T-cell (primary cell): ENCODE measurements at regions of chr17 and their contacts with region 1.

Region 1: GRCh38 chr17:77391668-77392375 is 251.1 kb downstream of the SEC14L1 start:
- DNase-seq: peak in 13 of 35 experiments; percentile 27 to 68 (median 32)
- ATAC-seq: peak; percentile 38 to 82 (median 74)
- H3K4me3 ChIP-seq: peak overlapping the region; percentile 2 to 58
- H3K4me3 Mint-ChIP-seq: peak overlapping the region; percentile 42 to 86 (median 62)
- H3K27ac ChIP-seq: peak overlapping the region; percentile 44
- H3K27ac Mint-ChIP-seq: peak overlapping the region; percentile 93 to 96
- H3K4me1 ChIP-seq: peaks cover 56 to 93% of the 10 kb centered on the region in 2 experiments
- H3K4me1 Mint-ChIP-seq: peaks cover 85 to 87% (median 86%) of the 10 kb centered on the region in 3 donors
- H3K27me3 ChIP-seq: no peaks in the 10 kb centered on the region
- H3K27me3 Mint-ChIP-seq: no peaks in the 10 kb centered on the region

Region 2: DNA sequence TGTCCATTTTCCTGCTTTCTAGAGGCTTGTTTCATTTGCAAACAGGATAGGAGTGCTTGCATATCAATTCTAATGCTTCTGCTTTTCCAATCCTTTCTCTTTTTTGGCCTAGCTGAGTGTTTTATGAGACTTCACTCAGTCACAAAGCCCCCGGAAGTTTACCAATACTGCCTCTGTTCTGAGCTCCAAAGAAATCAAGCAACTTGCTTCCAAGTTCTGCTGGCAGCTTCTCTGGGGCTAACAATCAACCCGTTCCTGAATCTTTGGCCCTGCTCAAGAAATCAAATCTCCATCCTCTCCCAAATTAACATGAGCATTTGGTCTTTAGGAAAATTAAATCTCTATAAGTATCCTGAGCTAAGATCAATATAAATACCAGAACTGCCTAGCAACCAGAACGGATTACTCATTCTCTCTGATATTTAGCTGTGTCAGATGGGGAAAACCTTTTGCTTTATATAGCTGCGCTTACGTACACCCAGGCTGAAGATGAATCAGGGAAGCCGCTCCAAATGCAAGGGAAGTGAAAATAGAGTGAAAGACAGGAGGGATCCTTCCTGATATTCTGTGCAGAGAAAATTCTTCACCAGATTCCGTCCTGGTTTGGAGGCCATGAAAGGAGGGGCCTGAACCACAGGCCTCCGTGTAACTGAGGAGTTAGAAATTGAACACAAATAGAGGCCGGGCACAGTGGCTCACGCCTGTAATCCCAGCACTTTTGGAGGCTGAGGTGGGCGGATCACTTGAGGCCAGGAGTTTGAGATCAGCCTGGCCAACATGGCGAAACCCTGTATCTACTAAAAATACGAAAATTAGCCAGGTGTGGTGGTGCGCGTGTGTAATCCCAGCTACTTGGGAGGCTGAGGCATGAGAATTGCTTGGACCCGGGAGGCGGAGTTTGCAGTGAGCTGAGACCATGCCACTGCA is 1963.0 kb before region 1 on chr17:
- CTCF ChIA-PET with region 1: interaction called in 1 of 2 experiments, 10 read pairs
- POLR2A ChIA-PET with region 1: no interaction called
- DNase-seq: no peak
- ATAC-seq: no peak
- H3K4me3 ChIP-seq: no peak overlapping the region
- H3K4me3 Mint-ChIP-seq: no peak overlapping the region
- H3K27ac ChIP-seq: no peak overlapping the region
- H3K27ac Mint-ChIP-seq: no peak overlapping the region
- H3K4me1 ChIP-seq: peaks cover 4 to 8% of the 10 kb centered on the region in 2 experiments
- H3K4me1 Mint-ChIP-seq: peaks cover 7 to 14% (median 11%) of the 10 kb centered on the region in 3 donors
- H3K27me3 ChIP-seq: peaks cover 0 to 5% of the 10 kb centered on the region in 2 experiments
- H3K27me3 Mint-ChIP-seq: peaks cover 3 to 4% of the 10 kb centered on the region in 2 donors

Region 3: GRCh38 chr17:76997981-76998531 is 393.8 kb before region 1 on chr17:
- CTCF ChIA-PET with region 1: no interaction called
- POLR2A ChIA-PET with region 1: interaction called in 1 of 2 experiments, 11 read pairs
- DNase-seq: peak; percentile 39 to 91 (median 69)
- ATAC-seq: peak; percentile 89 to 92 (median 89)
- H3K4me3 ChIP-seq: peak overlapping the region; percentile 27
- H3K4me3 Mint-ChIP-seq: peak overlapping the region; percentile 45 to 76 (median 56)
- H3K27ac ChIP-seq: peak overlapping the region; percentile 97
- H3K27ac Mint-ChIP-seq: peak overlapping the region; percentile 92 to 95
- H3K4me1 ChIP-seq: peaks cover 33 to 64% of the 10 kb centered on the region in 2 experiments
- H3K4me1 Mint-ChIP-seq: peaks cover 54 to 64% (median 58%) of the 10 kb centered on the region in 3 donors
- H3K27me3 ChIP-seq: no peaks in the 10 kb centered on the region
- H3K27me3 Mint-ChIP-seq: no peaks in the 10 kb centered on the region

Region 4: DNA sequence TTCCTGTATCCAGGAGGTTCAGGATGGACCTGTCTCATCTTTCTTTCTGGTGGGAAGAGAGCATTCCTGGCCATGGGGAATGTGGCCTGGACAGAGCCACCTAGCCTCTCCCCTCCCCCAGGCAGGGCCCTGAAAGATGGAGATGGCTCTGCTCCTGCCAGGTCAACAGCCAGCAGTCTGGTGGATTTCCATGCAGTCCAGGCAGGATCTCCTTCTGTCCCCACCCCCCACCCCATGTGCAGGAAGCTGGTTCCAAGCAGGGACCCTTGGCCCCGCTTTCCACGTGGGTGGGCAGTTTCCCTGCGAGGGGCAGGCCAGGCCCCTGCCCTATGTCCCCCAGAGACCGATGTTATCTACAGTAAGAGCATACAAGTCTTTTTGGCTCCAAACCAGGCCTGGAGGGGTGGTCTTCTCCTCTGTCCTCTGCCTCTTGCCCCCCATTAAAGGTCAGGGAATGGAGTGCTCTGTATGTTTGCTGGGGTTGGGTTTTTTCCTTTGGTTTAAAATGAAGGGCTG is 10.6 kb before region 1 on chr17:
- CTCF ChIA-PET with region 1: no interaction called
- POLR2A ChIA-PET with region 1: interaction called in 1 of 2 experiments, 10 read pairs
- DNase-seq: no peak
- ATAC-seq: no peak
- H3K4me3 ChIP-seq: peak overlapping the region in 1 of 2 donors; percentile 5
- H3K4me3 Mint-ChIP-seq: peak overlapping the region; percentile 17 to 88 (median 50)
- H3K27ac ChIP-seq: peak overlapping the region; percentile 30
- H3K27ac Mint-ChIP-seq: peak overlapping the region; percentile 96 to 97
- H3K4me1 ChIP-seq: peaks cover 67 to 99% of the 10 kb centered on the region in 2 experiments
- H3K4me1 Mint-ChIP-seq: peaks cover 89 to 94% (median 93%) of the 10 kb centered on the region in 3 donors
- H3K27me3 ChIP-seq: no peaks in the 10 kb centered on the region
- H3K27me3 Mint-ChIP-seq: no peaks in the 10 kb centered on the region